ENCODE measurements at regions of chr16 and their contacts with region 1.

Region 1: GRCh38 chr16:29805378-29806098 is 791 bp upstream of the MAZ start:
- DNase-seq: peak; percentile 94 to 99
- H3K4me3 ChIP-seq: peak overlapping the region; percentile 76
- H3K27ac ChIP-seq: peak overlapping the region; percentile 68
- H3K4me1 ChIP-seq: peaks cover 29% of the 10 kb centered on the region
- H3K27me3 ChIP-seq: no peaks in the 10 kb centered on the region
- CTCF ChIP-seq: no peak

Region 2: DNA sequence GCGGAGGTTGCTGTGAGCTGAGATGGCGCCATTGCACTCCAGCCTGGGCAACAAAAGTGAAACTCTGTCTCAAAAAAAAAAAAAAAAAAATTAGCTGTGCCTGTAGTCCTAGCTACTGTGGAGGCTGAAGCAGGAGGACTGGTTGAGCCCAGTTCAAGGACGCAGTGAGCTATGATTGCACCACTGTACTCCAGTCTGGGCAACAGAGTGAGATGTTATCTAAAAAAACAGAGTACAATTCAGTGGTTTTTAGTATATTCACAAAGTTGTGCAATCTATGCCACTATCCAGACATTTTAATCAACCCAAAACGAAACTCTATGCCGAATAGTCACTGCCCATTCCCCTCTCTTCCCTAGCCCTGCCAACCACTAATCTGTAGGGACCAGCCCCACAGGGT is 84.8 kb before region 1 on chr16:
- CTCF ChIA-PET with region 1: interaction called, 10 read pairs
- POLR2A ChIA-PET with region 1: interaction called, 4 read pairs
- intact Hi-C with region 1: no loop called
- DNase-seq: no peak
- H3K4me3 ChIP-seq: no peak overlapping the region
- H3K27ac ChIP-seq: no peak overlapping the region
- H3K4me1 ChIP-seq: no peaks in the 10 kb centered on the region
- H3K27me3 ChIP-seq: no peaks in the 10 kb centered on the region
- CTCF ChIP-seq: no peak

Region 3: DNA sequence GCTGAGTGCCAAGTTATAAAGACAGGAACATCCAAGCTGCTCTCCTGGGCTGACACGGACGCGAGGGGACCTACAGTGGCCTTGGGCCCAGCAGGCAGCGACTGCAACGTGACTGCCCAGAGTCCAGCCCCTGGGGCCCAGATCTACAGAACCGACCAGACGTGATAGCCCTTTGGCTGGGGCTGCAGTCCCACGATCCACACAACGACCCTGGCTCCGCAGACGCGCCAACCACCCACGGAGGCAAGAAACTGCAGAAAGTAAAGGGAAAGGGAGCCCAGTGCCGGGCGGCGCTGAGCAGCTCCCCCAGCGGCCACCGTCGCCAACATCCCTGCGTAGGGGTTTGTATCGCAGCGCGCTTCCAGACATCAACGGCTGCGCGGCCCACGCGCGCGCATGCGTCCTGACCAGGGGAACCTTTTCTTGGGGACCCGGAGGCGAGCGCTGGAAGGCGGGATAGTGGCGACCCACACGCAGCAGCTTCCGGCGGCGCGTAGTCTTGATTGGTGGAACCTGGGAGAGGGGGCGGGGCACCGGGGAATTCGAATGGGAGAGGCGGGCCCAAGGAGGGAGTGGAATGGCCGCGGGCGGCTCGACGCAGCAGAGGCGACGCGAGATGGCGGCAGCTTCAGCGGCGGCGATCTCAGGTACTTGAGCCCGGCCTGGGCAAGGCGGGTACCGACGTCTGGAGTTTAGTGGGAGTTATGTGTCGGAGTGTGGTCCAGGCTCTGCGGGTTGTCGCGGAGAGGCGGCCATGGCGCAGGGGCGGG is 15.2 kb before region 1 on chr16 and contains the start of gene KIF22:
- CTCF ChIA-PET with region 1: no interaction called
- POLR2A ChIA-PET with region 1: interaction called, 18 read pairs
- intact Hi-C with region 1: loop called (anchors 1 kb)
- DNase-seq: peak; percentile 96 to 100
- H3K4me3 ChIP-seq: peak within 1 kb of the TSS; percentile 94
- H3K27ac ChIP-seq: 0 out of 2 replicates have a peak within 1 kb of the TSS, but pooled peaks have one; percentile 10
- H3K4me1 ChIP-seq: peaks cover 17% of the 10 kb centered on the region
- H3K27me3 ChIP-seq: no peaks in the 10 kb centered on the region
- CTCF ChIP-seq: peak; percentile 81
- total RNA-seq, gene KIF22: 179 and 195 TPM in 2 replicates

Region 4: DNA sequence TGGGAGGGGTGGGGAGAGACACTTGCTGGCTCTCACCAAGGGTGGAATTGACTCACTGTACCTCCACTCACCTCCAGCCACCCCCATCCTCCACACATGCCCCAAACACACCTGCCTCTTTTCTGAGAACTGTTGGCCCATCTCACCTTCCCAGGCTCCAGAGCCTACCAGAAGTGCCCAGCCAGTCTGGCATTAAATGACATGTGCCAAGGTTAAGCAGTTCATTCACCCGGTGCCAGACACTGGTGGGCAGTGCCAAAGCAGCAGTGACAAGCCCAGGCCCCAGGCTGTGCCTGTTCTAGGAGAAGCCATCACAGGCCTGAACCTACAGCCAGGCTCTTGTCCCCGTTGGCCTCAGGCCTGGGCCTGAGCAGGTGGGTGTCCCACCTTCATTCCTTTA is 26.0 kb after region 1 on chr16:
- CTCF ChIA-PET with region 1: no interaction called
- POLR2A ChIA-PET with region 1: interaction called, 12 read pairs
- intact Hi-C with region 1: no loop called
- DNase-seq: no peak
- H3K4me3 ChIP-seq: no peak overlapping the region
- H3K27ac ChIP-seq: no peak overlapping the region
- H3K4me1 ChIP-seq: no peaks in the 10 kb centered on the region
- H3K27me3 ChIP-seq: no peaks in the 10 kb centered on the region
- CTCF ChIP-seq: no peak

Region 5: GRCh38 chr16:29848420-29849297 is 43.1 kb after region 1 on chr16:
- CTCF ChIA-PET with region 1: interaction called, 10 read pairs
- POLR2A ChIA-PET with region 1: no interaction called
- intact Hi-C with region 1: no loop called
- DNase-seq: peak in 1 of 2 experiments; percentile 75
- H3K4me3 ChIP-seq: no peak overlapping the region
- H3K27ac ChIP-seq: no peak overlapping the region
- H3K4me1 ChIP-seq: no peaks in the 10 kb centered on the region
- H3K27me3 ChIP-seq: no peaks in the 10 kb centered on the region
- CTCF ChIP-seq: peak; percentile 90

Region 6: GRCh38 chr16:29915590-29916247 is 110.2 kb after region 1 on chr16:
- CTCF ChIA-PET with region 1: no interaction called
- POLR2A ChIA-PET with region 1: interaction called, 20 read pairs
- intact Hi-C with region 1: no loop called
- DNase-seq: peak in 1 of 2 experiments; percentile 61
- H3K4me3 ChIP-seq: no peak overlapping the region
- H3K27ac ChIP-seq: peak overlapping the region; percentile 57
- H3K4me1 ChIP-seq: peaks cover 16% of the 10 kb centered on the region
- H3K27me3 ChIP-seq: no peaks in the 10 kb centered on the region
- CTCF ChIP-seq: no peak

Region 7: GRCh38 chr16:30018731-30019158 is 213.2 kb after region 1 on chr16:
- CTCF ChIA-PET with region 1: interaction called, 3 read pairs
- POLR2A ChIA-PET with region 1: no interaction called
- intact Hi-C with region 1: loop called (anchors 2 kb)
- DNase-seq: peak in 1 of 2 experiments; percentile 89
- H3K4me3 ChIP-seq: no peak overlapping the region
- H3K27ac ChIP-seq: no peak overlapping the region
- H3K4me1 ChIP-seq: no peaks in the 10 kb centered on the region; the same call in 1 of the 2 replicates
- H3K27me3 ChIP-seq: peaks cover 8% of the 10 kb centered on the region; the same call in 1 of the 2 replicates
- CTCF ChIP-seq: no peak

Measured in PC-9 (cell line).